Psoas muscle (tissue), 8 donors: ENCODE measurements at regions of chr6 and their contacts with region 1.

Region 1: GRCh38 chr6:26568601-26569432 is 27.9 kb upstream of the ABT1 start:
- DNase-seq: peak; percentile 87 to 93
- ATAC-seq: peak; percentile 79 to 91 (median 83)
- H3K4me3 ChIP-seq: peak overlapping the region; percentile 70
- H3K27ac ChIP-seq: peak overlapping the region; percentile 43
- H3K4me1 ChIP-seq: peaks cover 7% of the 10 kb centered on the region
- H3K27me3 ChIP-seq: no peaks in the 10 kb centered on the region
- CTCF ChIP-seq: no peak

Region 2: GRCh38 chr6:26183581-26184366 is 385.0 kb before region 1 on chr6:
- intact Hi-C with region 1: no loop called
- DNase-seq: peak; percentile 45 to 68
- ATAC-seq: peak; percentile 61 to 85 (median 76)
- H3K4me3 ChIP-seq: peak overlapping the region; percentile 72
- H3K27ac ChIP-seq: peak overlapping the region; percentile 65
- H3K4me1 ChIP-seq: peaks cover 4% of the 10 kb centered on the region
- H3K27me3 ChIP-seq: peaks cover 0 to 9% (median 8%) of the 10 kb centered on the region in 3 donors
- CTCF ChIP-seq: no peak

Region 3: DNA sequence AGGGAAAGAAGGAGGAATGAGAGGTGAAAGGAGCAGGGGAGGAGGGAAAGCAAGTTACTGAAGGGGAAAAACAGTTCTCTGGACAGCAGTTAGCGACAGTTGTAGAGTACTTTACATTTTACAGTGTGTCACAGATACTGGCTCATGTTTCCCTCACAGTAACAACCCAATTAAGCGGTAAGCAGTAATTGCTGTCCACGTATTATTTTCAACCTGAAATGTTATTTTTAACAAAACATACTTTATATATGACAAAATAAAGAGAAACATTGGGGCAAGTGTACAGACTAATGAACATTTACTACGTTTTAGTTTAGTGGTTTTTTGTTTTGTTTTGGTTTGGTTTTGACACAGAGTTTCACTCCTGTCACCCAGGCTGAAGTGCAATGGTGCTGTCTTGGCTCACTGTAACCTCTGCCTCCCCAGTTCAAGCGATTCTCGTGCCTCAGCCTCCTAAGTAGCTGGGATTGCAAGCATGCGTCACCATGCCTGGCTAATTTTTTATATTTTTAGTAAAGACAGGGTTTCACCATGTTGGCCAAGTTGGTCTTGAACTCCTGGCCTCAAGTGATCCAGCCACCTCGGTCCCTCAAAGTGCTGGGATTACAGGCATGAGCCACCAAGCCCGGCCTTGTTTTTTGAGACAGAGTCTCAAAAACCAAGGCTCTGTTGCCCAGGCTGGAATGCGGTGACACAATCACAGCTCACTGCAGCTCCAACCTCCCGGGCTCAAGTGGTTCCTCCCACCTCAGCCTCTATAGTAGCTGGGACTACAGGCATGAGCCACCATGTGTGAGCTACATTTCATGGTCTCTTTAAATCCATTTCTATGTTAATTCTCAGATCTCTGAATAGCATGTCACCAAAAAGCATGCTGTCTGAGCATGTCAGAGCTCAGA is 226.5 kb before region 1 on chr6:
- intact Hi-C with region 1: loop called in 1 of 2 experiments (anchors 10 kb)
- DNase-seq: no peak
- ATAC-seq: peak in 1 of 4 donors; percentile 16
- H3K4me3 ChIP-seq: no peak overlapping the region
- H3K27ac ChIP-seq: no peak overlapping the region
- H3K4me1 ChIP-seq: no peaks in the 10 kb centered on the region
- H3K27me3 ChIP-seq: peaks cover 0 to 9% (median 0%) of the 10 kb centered on the region in 3 donors
- CTCF ChIP-seq: no peak

Region 4: DNA sequence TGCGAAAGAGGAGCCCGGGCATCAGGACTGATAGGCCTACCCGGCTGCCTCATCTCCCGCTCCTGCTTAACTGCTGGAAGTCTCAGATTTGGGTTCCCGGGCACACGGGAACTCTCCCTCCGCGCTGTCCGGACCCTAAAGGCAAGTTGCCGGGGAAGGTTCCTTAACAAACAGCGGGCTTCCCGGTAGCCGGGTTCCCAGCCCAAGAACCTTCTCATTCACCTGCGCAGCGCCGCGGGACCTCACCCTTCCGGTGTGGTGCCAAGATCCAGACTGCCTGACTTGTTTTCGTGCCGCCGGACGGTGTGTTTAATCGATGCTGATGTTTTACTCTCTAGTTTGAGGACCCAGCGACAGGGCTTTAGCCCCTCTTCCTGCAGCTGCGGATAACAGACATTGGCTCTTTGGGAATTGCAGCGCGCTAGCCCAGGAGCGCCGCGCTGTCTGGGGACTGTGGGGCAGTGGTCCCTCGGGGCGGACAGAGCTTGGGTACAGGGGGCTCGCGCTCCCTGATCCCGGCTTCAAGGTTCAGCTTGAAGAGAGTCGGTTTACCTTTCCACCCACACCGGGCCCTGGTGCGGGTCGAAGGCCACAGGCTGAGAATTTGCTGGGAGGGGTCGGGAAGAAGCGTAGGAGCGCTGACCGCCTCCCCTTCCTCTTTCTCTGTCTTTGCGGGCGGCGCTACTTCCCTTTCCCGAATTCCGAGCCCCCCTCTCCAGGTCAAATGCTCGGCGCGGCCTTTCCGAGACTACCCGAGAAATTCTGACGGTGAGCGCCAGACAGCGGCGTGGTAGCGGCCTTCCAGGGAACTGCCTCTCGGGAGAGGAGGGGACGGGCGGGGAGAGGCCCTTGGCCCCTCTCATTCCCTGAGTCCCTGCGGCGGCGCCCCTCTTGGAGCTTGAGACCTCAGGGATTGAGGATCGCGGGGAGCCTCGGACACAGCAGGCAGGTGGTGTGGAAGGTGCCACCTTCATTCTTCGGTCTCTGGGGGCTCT is 45.2 kb after region 1 on chr6:
- intact Hi-C with region 1: no loop called
- DNase-seq: no peak
- ATAC-seq: no peak
- H3K4me3 ChIP-seq: peak overlapping the region; percentile 52
- H3K27ac ChIP-seq: no peak overlapping the region
- H3K4me1 ChIP-seq: peaks cover 3% of the 10 kb centered on the region
- H3K27me3 ChIP-seq: peaks cover 0 to 48% (median 11%) of the 10 kb centered on the region in 3 donors
- CTCF ChIP-seq: no peak